Activated B cell treated with CpG ODN at 0.5 μM for 24 hours (primary cell): ENCODE measurements at regions of chr21 and their contacts with region 1.

Region 1: GRCh38 chr21:35026617-35027562 is 22.2 kb downstream of the RUNX1 start:
- DNase-seq: peak; percentile 73
- ATAC-seq: peak; percentile 90
- H3K4me3 Mint-ChIP-seq: peak overlapping the region; percentile 87
- H3K27ac Mint-ChIP-seq: peak overlapping the region; percentile 98
- H3K4me1 Mint-ChIP-seq: peaks cover 65% of the 10 kb centered on the region
- H3K27me3 Mint-ChIP-seq: no peaks in the 10 kb centered on the region
- CTCF ChIP-seq: no peak

Region 2: DNA sequence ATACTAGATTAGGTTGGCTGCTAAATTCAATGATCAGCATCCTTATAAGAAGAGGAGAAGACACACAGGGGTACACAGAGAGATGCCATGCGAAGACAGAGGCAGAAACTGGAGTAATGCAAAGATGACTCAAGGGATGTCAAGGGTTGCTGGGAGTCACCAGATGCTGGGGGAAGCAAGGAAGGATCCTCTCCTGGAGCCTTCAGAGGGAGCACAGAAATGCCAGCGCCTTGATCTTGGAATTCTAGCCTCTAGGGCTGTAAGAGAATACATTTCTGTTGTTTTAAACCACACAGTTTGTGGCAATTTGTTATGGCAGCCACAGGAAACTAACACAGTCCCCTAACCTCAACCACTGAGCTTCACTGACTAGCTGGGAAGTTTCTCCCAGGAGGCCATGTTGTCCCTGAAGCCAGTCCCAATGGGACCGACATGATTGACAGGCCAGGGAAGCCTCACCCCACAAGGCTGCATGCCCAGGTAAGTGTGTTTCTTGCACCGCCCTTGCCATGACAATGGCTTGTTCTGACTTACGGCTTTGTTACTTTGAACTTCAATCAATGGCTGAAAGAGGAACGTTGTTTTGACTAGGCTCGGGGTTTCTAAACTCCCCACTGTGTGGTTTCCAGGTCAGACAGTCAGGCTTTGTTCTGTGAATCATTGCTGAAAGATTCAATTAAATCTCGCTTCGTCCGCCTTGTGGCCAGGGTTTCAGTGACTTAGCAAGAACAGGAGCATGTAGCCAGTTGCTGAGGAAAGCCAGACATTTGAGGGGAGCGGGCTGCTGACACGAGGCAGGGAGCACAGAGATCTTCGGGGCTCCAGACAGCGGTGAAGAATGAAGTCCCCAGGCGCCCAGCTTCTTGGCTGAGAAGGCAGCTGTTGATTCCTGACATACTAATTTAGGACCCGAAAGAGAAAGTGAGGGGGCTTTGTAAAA is 40.1 kb before region 1 on chr21:
- CTCF ChIA-PET with region 1: no interaction called
- POLR2A ChIA-PET with region 1: interaction called, 9 read pairs
- intact Hi-C with region 1: loop called (anchors 1 kb)
- DNase-seq: peak; percentile 36
- ATAC-seq: peak; percentile 74
- H3K4me3 Mint-ChIP-seq: peak overlapping the region; percentile 69
- H3K27ac Mint-ChIP-seq: peak overlapping the region; percentile 78
- H3K4me1 Mint-ChIP-seq: peaks cover 78% of the 10 kb centered on the region
- H3K27me3 Mint-ChIP-seq: no peaks in the 10 kb centered on the region
- CTCF ChIP-seq: no peak

Region 3: DNA sequence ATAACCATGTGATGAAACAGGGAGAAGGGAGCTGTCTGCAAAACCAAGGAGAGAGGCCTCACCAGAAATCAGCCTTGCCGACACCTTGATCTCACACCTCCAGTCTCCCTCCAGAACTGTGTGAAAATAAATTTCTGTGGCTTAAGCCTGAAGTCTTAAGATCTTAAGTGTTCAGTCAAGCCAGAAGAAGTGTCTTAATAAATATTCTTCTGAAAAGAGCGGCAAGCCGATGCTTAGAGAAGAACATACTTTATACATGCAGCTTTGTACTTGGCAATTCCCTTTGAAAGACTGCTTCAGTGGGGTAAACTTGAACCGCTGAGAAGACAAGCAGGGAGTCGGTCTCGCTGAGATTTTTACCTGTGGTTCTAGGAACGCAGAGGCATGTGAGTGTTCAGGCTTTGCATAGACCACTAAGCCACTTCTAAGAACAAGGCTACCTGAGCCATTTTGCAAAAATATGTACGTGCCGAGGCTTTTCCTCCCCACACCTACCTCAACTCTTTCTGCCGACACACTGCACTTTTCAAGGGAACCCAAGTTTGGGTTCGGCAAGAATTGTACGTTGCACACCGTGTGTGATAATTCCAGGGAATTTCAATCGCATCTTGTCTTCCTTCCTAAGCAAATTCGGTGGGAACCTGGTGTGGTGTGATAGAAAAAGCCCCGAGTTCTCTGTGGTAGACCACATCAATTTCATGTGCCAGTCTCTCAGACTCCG is 18.8 kb after region 1 on chr21:
- CTCF ChIA-PET with region 1: interaction called, 10 read pairs
- POLR2A ChIA-PET with region 1: interaction called, 101 read pairs
- intact Hi-C with region 1: loop called (anchors 1 kb)
- DNase-seq: no peak
- ATAC-seq: no peak
- H3K4me3 Mint-ChIP-seq: peak overlapping the region; percentile 91
- H3K27ac Mint-ChIP-seq: peak overlapping the region; percentile 97
- H3K4me1 Mint-ChIP-seq: peaks cover 98% of the 10 kb centered on the region
- H3K27me3 Mint-ChIP-seq: no peaks in the 10 kb centered on the region
- CTCF ChIP-seq: no peak